Heart right ventricle (tissue), 16 donors: ENCODE measurements at regions of chr5 and their contacts with region 1.

Region 1: GRCh38 chr5:122192497-122193496 is 63.5 kb downstream of the ZNF474 start:
- DNase-seq: peak in 1 of 2 donors; percentile 51
- ATAC-seq: peak in 7 of 8 donors; percentile 69 to 79 (median 70)
- H3K4me3 ChIP-seq: no peak overlapping the region
- H3K27ac ChIP-seq: no peak overlapping the region
- H3K4me1 ChIP-seq: peaks cover 0 to 20% (median 4%) of the 10 kb centered on the region in 9 donors
- H3K27me3 ChIP-seq: peaks cover 0 to 8% (median 0%) of the 10 kb centered on the region in 7 donors
- CTCF ChIP-seq: peak; percentile 8 to 74 (median 67)

Region 2: DNA sequence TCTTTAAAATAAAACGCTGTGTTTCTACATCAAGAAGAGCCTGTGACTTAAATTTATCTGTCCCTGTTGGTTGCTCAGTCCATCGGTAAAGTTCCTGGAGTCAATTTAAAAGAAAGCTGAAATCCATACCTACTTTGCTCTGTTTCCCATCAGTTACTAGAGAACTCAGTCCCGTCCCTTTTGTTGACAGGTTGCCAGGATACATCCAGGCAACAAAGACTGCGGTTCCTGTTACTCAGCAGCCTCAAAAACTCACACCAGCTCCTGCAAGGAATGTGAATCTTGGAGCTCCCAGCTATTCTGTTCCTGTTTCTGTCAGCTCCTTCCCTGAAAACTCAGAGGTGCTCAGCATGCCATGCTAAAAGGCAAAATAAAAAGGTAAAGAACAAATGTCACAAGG is 63.5 kb before region 1 on chr5 and contains the start of gene ZNF474:
- intact Hi-C with region 1: loop called in 1 of 10 experiments (anchors 2 kb)
- DNase-seq: peak in 1 of 2 donors; percentile 56
- ATAC-seq: peak in 7 of 8 donors; percentile 29 to 85 (median 70)
- H3K4me3 ChIP-seq: no peak within 1 kb of the TSS
- H3K27ac ChIP-seq: no peak within 1 kb of the TSS
- H3K4me1 ChIP-seq: peaks cover 0 to 9% (median 4%) of the 10 kb centered on the region in 9 donors
- H3K27me3 ChIP-seq: no peaks in the 10 kb centered on the region
- CTCF ChIP-seq: no peak
- total RNA-seq, gene ZNF474: 0.19 to 0.20 TPM in 2 of 10 donors, not detected in the others

Region 3: GRCh38 chr5:122311961-122312590 is 119.3 kb after region 1 on chr5 and contains the start of gene SNCAIP:
- intact Hi-C with region 1: loop called in 2 of 10 experiments (anchors 5 to 10 kb)
- DNase-seq: peak; percentile 14 to 52
- ATAC-seq: peak; percentile 65 to 84 (median 72)
- H3K4me3 ChIP-seq: peak within 1 kb of the TSS; percentile 54 to 87 (median 63)
- H3K27ac ChIP-seq: peak within 1 kb of the TSS; percentile 34 to 73 (median 61)
- H3K4me1 ChIP-seq: peaks cover 0 to 27% (median 15%) of the 10 kb centered on the region in 9 donors
- H3K27me3 ChIP-seq: peaks cover 0 to 68% (median 29%) of the 10 kb centered on the region in 7 donors
- CTCF ChIP-seq: no peak
- total RNA-seq, gene SNCAIP: 0.70 to 2.5 (median 1.4) TPM

Region 4: GRCh38 chr5:122415030-122415800 is 222.4 kb after region 1 on chr5:
- intact Hi-C with region 1: loop called (anchors 1 to 5 kb)
- DNase-seq: peak; percentile 25 to 39
- ATAC-seq: peak; percentile 88 to 96 (median 93)
- H3K4me3 ChIP-seq: no peak overlapping the region
- H3K27ac ChIP-seq: no peak overlapping the region
- H3K4me1 ChIP-seq: no peaks in the 10 kb centered on the region
- H3K27me3 ChIP-seq: no peaks in the 10 kb centered on the region
- CTCF ChIP-seq: peak; percentile 25 to 77 (median 70)

Region 5: GRCh38 chr5:122500245-122501075 is 307.7 kb after region 1 on chr5:
- intact Hi-C with region 1: loop called in 6 of 10 experiments (anchors 2 to 10 kb)
- DNase-seq: peak in 1 of 2 donors; percentile 40
- ATAC-seq: peak; percentile 30 to 86 (median 76)
- H3K4me3 ChIP-seq: peak overlapping the region in 1 of 10 donors; percentile 5
- H3K27ac ChIP-seq: peak overlapping the region in 6 of 10 donors; percentile 4 to 54 (median 34)
- H3K4me1 ChIP-seq: peaks cover 0 to 18% (median 0%) of the 10 kb centered on the region in 9 donors
- H3K27me3 ChIP-seq: no peaks in the 10 kb centered on the region
- CTCF ChIP-seq: peak; percentile 16 to 63 (median 49)

Region 6: DNA sequence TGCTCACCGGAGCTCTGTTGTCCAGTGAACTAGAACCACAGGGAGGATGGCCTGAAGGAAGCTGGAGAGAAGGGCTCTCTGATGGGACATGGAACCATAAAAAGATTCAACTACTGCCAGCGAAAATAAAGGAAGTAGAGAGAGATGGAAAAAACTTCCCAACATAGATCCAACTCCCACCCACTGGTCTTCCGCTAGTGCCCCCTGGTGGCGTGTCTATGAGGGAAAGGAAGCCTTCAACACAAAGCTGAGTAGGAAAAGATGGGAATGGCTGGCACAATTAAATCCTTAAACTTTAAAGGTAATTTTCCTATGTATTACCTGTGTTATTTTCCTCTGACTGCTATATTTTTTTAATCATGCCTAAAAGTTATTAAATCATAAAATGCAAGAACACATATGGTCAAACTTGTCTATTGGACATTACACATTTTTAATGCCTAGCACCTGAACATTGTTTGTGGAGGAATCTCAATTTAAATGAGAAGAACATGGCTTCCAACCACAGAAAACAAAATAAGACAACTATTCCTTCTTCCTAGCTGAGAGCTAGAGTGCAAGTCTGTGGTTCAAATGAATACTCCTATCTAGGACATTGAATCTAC is 1178.9 kb after region 1 on chr5:
- intact Hi-C with region 1: loop called in 1 of 10 experiments (anchors 10 kb)
- DNase-seq: peak; percentile 9 to 48
- ATAC-seq: no peak
- H3K4me3 ChIP-seq: no peak overlapping the region
- H3K27ac ChIP-seq: no peak overlapping the region
- H3K4me1 ChIP-seq: no peaks in the 10 kb centered on the region
- H3K27me3 ChIP-seq: no peaks in the 10 kb centered on the region
- CTCF ChIP-seq: peak in 8 of 9 donors; percentile 27 to 65 (median 56)